ENCODE measurements at regions of chr3 and their contacts with region 1.

Region 1: DNA sequence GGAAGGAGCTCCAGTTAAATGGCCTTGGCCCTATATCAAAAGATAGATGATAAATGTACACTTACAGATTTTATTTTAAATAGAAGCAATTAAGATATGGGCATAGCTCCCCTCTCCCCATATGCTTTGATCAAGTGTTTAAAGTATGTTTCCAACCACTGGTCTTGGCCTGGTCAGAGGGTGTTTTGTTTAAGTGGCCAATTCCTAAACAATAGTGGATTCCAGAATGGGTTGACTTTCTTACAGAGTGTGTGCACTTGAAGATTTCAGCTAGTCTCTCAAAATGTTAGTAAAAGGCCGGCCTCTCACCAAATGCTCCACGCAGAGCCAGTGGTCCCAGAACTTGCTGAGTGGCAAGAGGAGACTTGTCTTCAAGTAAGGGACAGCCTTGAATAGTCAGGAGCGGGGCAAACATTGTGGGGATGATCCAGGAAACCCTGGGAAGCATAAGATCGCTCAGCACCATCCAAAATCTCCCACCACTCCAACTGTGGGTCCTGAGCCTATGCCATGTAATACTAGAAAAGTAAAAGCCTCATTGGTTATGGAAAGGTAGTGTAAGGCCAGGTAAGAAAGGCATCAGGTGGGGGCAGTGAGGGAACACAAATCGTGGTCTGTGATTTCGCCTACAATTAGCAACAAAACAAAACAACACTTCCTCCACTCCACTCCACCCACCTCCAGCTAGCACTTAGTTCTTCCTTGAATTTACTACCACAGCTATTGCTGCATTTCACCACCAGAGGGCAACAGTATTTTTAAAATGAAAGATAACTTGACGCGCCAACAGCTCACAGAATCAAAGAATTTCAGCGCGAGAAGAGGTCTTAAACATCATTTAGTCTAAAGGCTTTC is 4.8 kb downstream of the RARRES1 start:
- DNase-seq: peak; percentile 83
- ATAC-seq: peak; percentile 12; the same call in 1 of the 2 replicates
- H3K4me3 ChIP-seq: no peak overlapping the region
- H3K27ac ChIP-seq: peak overlapping the region; percentile 84
- H3K4me1 ChIP-seq: peaks cover 42% of the 10 kb centered on the region
- H3K27me3 ChIP-seq: no peaks in the 10 kb centered on the region
- CTCF ChIP-seq: peak; percentile 86
- POLR2A ChIP-seq: no peak
- RAD21 ChIP-seq: peak; percentile 77

Region 2: DNA sequence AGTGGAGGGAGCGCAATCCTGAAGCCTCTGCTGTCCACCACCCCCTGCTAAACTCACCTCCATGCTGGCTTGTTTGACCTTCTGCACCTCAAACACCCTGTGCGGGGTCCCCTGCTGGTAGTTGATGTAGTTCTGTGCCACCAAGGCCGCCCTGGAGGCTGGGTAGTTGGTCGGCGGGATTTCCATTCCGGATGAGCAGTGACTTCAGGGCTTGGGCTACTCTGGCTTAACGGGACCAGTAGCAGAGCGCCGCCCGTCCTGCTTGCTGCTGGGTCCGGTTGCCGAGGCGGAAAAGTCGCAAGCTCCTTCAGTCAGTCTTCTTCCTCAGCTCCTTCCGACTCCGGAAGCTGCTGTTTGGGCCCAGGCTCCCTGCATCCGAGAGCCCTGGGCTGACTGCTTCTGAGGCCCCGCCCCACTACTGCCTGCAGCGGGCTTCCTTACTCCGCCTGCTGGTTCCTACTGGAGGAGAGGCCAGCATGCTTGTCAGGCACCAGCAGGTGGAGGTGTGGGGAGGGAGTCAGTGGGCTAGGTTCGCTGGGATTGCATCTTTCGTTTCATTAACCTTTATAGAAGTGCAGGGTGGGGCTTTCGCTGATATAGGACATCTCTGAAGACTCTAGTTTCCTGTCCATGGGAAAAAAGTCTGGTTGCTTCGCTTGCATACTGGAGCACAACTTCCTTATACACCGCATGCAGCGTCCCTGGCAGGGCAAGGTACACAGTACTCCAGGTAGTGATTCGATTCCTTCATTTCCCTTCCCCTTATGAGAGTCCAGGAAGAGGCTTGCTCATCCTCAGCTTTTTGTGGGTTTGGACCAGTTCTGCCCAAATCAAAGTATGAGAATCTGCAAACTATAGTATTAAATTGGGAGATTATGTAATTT is 54.9 kb before region 1 on chr3 and contains the start of gene LXN:
- CTCF ChIA-PET with region 1: interaction called, 3 read pairs
- POLR2A ChIA-PET with region 1: no interaction called
- dilution Hi-C with region 1: no loop called
- in situ Hi-C with region 1: no loop called
- intact Hi-C with region 1: loop called (anchors 1 kb)
- DNase-seq: peak; percentile 87
- ATAC-seq: peak; percentile 99
- H3K4me3 ChIP-seq: peak within 1 kb of the TSS; percentile 59
- H3K27ac ChIP-seq: peak within 1 kb of the TSS; percentile 83
- H3K4me1 ChIP-seq: peaks cover under 1% of the 10 kb centered on the region; the same call in 1 of the 2 replicates
- H3K27me3 ChIP-seq: no peaks in the 10 kb centered on the region
- CTCF ChIP-seq: peak; percentile 95
- POLR2A ChIP-seq: peak; percentile 69; the same call in 1 of the 2 replicates
- RAD21 ChIP-seq: peak; percentile 65
- total RNA-seq, gene LXN: 83.0 and 93.6 TPM in 2 replicates

Region 3: DNA sequence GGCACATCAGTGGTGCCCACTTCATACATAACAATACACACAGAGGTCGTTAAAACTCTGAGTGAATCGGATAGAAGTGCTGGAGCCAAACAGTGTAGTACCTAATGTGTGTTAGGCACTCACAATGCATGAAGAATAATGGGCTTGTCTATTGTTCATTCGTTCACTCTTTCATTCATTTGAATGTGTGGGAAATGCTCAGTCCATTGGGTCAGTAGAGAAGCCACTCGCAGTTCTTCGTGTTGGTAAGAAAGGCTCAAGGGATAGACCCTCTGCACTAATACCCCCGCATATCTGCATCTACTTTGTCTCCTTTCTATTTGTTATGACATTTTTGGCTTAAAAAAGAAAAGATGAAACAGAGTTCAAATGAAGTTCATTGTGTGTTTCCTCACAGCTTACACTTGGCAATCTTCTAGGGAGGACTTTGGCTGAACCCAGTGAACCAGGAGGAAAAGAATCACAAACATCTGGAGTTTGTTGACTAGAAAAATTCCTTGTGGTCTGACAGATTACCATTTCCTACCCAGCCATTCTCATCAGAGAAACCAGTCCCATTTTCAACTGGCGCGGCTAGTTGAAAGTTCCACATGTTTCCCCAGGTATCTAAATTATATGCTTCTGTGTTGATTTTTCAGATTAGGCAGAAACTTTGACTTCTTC is 41.6 kb after region 1 on chr3:
- CTCF ChIA-PET with region 1: no interaction called
- POLR2A ChIA-PET with region 1: no interaction called
- dilution Hi-C with region 1: no loop called
- in situ Hi-C with region 1: no loop called
- intact Hi-C with region 1: loop called (anchors 1 kb)
- DNase-seq: peak; percentile 98
- ATAC-seq: peak; percentile 71
- H3K4me3 ChIP-seq: no peak overlapping the region
- H3K27ac ChIP-seq: peak overlapping the region; percentile 96
- H3K4me1 ChIP-seq: peaks cover 21% of the 10 kb centered on the region
- H3K27me3 ChIP-seq: no peaks in the 10 kb centered on the region
- CTCF ChIP-seq: no peak
- POLR2A ChIP-seq: 0 out of 2 replicates have a peak, but pooled peaks have one; percentile 23
- RAD21 ChIP-seq: no peak

Region 4: GRCh38 chr3:158790901-158791589 is 63.6 kb after region 1 on chr3:
- CTCF ChIA-PET with region 1: interaction called, 51 read pairs
- POLR2A ChIA-PET with region 1: no interaction called
- dilution Hi-C with region 1: no loop called
- in situ Hi-C with region 1: loop called (anchors 5 kb)
- intact Hi-C with region 1: loop called (anchors 1 kb)
- DNase-seq: peak; percentile 86
- ATAC-seq: peak; percentile 36; the same call in 1 of the 2 replicates
- H3K4me3 ChIP-seq: no peak overlapping the region
- H3K27ac ChIP-seq: no peak overlapping the region
- H3K4me1 ChIP-seq: peaks cover 6% of the 10 kb centered on the region
- H3K27me3 ChIP-seq: no peaks in the 10 kb centered on the region
- CTCF ChIP-seq: peak; percentile 95
- POLR2A ChIP-seq: no peak
- RAD21 ChIP-seq: peak; percentile 89

Measured in IMR-90 (cell line).